Activated CD4-positive, alpha-beta memory T cell treated with anti-CD3 and anti-CD28 coated beads, Interleukin-2, amount 10 ng/mL, durations not matched to agents 7 days and 5 days (primary cell): ENCODE measurements at regions of chr1 and their contacts with region 1.

Region 1: DNA sequence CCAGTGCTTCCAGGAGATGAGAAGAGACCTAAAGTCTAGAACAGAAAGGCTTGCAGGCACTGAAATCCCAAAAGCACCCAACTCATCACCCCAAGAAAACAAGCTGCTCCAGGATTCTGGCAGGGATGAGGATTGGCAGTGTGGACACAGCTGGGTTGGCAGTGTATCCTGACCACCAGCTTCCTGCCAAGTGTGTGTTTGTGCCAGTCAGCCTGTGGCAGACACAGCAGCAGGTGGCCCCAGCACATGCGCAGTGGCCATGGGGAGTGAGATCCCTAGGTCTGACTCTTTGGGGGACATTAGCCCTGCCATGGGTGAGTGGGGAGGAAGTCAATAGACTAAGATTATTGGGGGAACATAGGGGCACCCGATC is 8.7 kb upstream of the SNAPIN start:
- DNase-seq: no peak
- H3K4me3 Mint-ChIP-seq: no peak overlapping the region
- H3K27ac Mint-ChIP-seq: no peak overlapping the region
- H3K4me1 Mint-ChIP-seq: peaks cover 20% of the 10 kb centered on the region
- H3K27me3 Mint-ChIP-seq: no peaks in the 10 kb centered on the region

Region 2: GRCh38 chr1:153639280-153639679 is 10.6 kb before region 1 on chr1:
- CTCF ChIA-PET with region 1: interaction called, 9 read pairs
- POLR2A ChIA-PET with region 1: interaction called, 52 read pairs
- DNase-seq: no peak
- H3K4me3 Mint-ChIP-seq: no peak overlapping the region
- H3K27ac Mint-ChIP-seq: no peak overlapping the region
- H3K4me1 Mint-ChIP-seq: peaks cover 44% of the 10 kb centered on the region
- H3K27me3 Mint-ChIP-seq: no peaks in the 10 kb centered on the region